ENCODE measurements at regions of chr18 and their contacts with region 1.

Region 1: GRCh38 chr18:32530947-32531651 is 60.4 kb upstream of the GAREM1 start:
- DNase-seq: peak; percentile 40
- H3K4me3 Mint-ChIP-seq: no peak overlapping the region
- H3K27ac Mint-ChIP-seq: peak overlapping the region; percentile 9
- H3K4me1 Mint-ChIP-seq: peaks cover 17% of the 10 kb centered on the region
- H3K27me3 Mint-ChIP-seq: peaks cover 13% of the 10 kb centered on the region

Region 2: DNA sequence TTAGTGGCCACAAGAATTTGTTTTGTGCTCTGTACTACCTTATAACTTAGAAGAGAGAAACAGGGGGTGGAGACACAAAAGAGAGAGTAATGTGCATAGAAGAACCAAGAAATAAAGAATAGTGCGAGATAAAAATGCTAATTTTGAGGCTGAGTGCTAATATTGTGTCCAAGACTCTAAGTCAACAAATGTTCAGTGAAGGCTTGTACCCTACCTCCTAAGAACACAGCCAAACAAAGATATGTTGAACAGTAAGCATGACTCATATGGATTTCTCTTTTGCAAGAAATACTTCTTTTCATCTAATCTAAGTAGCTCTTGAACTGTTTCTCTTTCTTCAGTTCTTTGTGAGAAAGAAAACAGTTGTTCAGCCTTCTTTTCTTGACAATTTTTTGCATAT is 105.6 kb before region 1 on chr18:
- CTCF ChIA-PET with region 1: no interaction called
- intact Hi-C with region 1: no loop called
- DNase-seq: no peak
- H3K4me3 Mint-ChIP-seq: no peak overlapping the region
- H3K27ac Mint-ChIP-seq: no peak overlapping the region
- H3K4me1 Mint-ChIP-seq: no peaks in the 10 kb centered on the region
- H3K27me3 Mint-ChIP-seq: peaks cover 24% of the 10 kb centered on the region

Region 3: GRCh38 chr18:32511147-32511546 is 20.0 kb before region 1 on chr18:
- CTCF ChIA-PET with region 1: interaction called, 4 read pairs
- intact Hi-C with region 1: loop called (anchors 1 kb)
- DNase-seq: no peak
- H3K4me3 Mint-ChIP-seq: no peak overlapping the region
- H3K27ac Mint-ChIP-seq: no peak overlapping the region
- H3K4me1 Mint-ChIP-seq: peaks cover 6% of the 10 kb centered on the region
- H3K27me3 Mint-ChIP-seq: peaks cover 6% of the 10 kb centered on the region